Activated naive CD4-positive, alpha-beta T cell treated with anti-CD3 and anti-CD28 coated beads for 36 hours (primary cell): ENCODE measurements at regions of chr4 and their contacts with region 1.

Region 1: DNA sequence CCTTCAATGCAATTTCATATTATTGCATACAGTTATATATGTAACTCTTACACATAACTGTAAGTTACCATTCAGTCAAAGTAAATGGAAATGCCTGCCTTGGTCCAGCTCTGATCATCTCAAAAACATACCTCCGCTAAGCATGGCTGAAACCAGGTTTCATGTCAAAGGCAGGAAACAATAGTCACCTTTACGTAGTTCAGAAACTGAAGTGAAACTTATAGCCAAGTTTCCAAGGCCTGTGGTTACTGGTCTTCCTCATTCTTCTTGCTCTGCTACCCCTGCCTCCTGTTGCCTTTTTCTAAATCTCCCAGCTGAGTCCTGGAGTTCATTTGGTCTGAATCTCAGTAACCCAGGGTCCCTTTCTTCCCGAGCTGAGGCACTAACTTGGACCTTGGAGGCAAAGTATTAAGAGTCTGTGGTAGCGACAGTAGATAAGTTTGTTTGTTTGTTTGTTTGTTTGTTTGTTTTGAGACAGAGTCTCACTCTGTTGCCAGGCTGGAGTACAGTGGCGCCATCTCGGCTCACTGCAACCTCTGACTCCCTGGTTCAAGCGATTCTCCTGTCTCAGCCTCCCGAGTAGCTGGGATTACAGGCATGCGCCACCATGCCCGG is 30.8 kb downstream of the DAPP1 start:
- DNase-seq: peak; percentile 61
- H3K4me3 Mint-ChIP-seq: peak overlapping the region; percentile 36
- H3K27ac Mint-ChIP-seq: peak overlapping the region; percentile 90
- H3K4me1 Mint-ChIP-seq: peaks cover 76% of the 10 kb centered on the region
- H3K27me3 Mint-ChIP-seq: no peaks in the 10 kb centered on the region

Region 2: DNA sequence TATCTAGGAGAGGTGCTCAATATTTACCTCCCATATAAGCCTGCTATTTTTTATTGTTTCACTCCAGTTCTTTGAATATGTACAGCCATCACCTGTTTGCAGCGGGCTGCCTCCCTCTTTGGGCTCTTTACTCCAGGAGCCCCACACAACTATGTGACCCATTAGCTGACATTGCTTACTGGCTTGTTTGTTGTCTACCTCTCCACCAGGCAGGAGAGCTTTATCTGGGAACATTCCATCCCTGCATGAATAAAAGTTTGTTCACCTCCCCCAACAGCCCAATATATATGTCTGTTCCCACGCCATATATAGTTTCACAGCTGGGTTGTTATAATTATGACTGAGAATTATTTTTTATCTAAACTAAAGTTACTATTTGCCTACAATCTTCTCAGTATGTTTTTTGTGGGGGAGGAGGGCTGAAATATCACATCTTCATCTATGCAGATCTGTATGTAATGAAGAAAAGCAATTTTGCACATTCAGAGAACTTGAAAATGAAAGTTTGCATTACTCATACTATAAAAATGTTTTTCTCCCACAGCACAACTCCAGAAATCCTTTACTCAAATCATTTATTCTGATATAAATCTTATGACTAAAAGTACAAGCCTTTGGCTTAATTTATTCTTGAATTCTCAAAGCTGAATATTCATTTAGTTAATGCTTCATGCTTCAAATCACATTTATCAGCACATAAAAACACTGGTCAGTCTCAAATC is 92.1 kb before region 1 on chr4:
- CTCF ChIA-PET with region 1: no interaction called
- intact Hi-C with region 1: loop called (anchors 2 kb)
- DNase-seq: no peak
- H3K4me3 Mint-ChIP-seq: no peak overlapping the region
- H3K27ac Mint-ChIP-seq: no peak overlapping the region
- H3K4me1 Mint-ChIP-seq: peaks cover 24% of the 10 kb centered on the region
- H3K27me3 Mint-ChIP-seq: peaks cover 28% of the 10 kb centered on the region

Region 3: GRCh38 chr4:99790796-99791617 is 56.5 kb before region 1 on chr4:
- CTCF ChIA-PET with region 1: no interaction called
- intact Hi-C with region 1: no loop called
- DNase-seq: no peak
- H3K4me3 Mint-ChIP-seq: no peak overlapping the region
- H3K27ac Mint-ChIP-seq: no peak overlapping the region
- H3K4me1 Mint-ChIP-seq: no peaks in the 10 kb centered on the region
- H3K27me3 Mint-ChIP-seq: peaks cover 14% of the 10 kb centered on the region

Region 4: GRCh38 chr4:99861120-99861905 is 13.8 kb after region 1 on chr4:
- CTCF ChIA-PET with region 1: interaction called, 3 read pairs
- intact Hi-C with region 1: loop called (anchors 1 kb)
- DNase-seq: peak; percentile 33
- H3K4me3 Mint-ChIP-seq: no peak overlapping the region
- H3K27ac Mint-ChIP-seq: peak overlapping the region; percentile 6
- H3K4me1 Mint-ChIP-seq: peaks cover 32% of the 10 kb centered on the region
- H3K27me3 Mint-ChIP-seq: no peaks in the 10 kb centered on the region

Region 5: GRCh38 chr4:99894161-99894997 is 46.9 kb after region 1 on chr4 and contains the start of gene LAMTOR3:
- CTCF ChIA-PET with region 1: no interaction called
- intact Hi-C with region 1: loop called (anchors 2 kb)
- DNase-seq: peak; percentile 92
- H3K4me3 Mint-ChIP-seq: peak within 1 kb of the TSS; percentile 95
- H3K27ac Mint-ChIP-seq: peak within 1 kb of the TSS; percentile 92
- H3K4me1 Mint-ChIP-seq: peaks cover 32% of the 10 kb centered on the region
- H3K27me3 Mint-ChIP-seq: no peaks in the 10 kb centered on the region
- total RNA-seq, gene LAMTOR3: 24.9 to 26.9 TPM